Ovary (tissue), 10 donors: ENCODE measurements at regions of chr2 and their contacts with region 1.

Region 1: GRCh38 chr2:158006961-158007719 is 94.5 kb upstream of the UPP2 start:
- DNase-seq: no peak
- H3K4me3 ChIP-seq: no peak overlapping the region
- H3K27ac ChIP-seq: no peak overlapping the region
- H3K4me1 ChIP-seq: no peaks in the 10 kb centered on the region
- H3K27me3 ChIP-seq: no peaks in the 10 kb centered on the region
- CTCF ChIP-seq: no peak
- EP300 ChIP-seq: no peak
- POLR2A ChIP-seq: no peak

Region 2: DNA sequence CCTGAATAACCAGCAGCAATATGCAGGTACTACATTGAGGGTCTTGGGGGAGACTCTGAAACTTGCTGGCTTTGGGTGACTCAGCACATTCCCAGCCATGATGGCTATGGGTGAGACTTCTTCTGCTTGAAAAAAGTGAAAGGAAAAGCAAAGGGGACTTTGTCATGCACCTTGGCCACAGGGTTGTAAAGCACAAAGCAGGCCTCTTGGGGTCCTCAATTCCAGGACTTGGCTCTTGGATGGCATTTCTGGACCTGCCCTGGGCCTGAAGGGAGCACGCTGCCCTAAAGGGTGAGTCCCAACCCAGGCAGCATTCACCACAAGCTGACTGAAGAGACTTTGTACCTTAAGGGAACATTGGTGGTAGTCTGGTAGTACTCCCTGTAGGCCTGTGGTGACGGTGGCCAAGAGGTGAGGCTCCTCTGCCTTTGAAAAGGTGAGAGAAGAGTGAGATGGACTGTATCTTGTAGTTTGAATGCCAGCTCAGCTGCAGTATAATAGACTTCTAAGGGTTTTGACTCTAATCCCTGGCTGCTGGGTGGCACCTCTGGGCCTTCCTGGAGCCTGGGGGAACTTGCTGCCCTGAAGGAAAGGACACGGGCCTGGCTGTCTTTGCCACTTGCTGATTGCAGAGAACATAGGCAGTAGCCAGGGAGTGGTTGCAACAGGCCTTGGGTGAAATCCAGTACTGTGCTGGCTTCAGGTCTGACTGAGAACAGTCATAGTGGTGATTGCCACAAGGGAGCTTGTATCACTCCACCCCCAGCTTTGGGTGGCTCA is 526.8 kb before region 1 on chr2:
- intact Hi-C with region 1: loop called in 1 of 4 experiments (anchors 10 kb)
- DNase-seq: no peak
- H3K4me3 ChIP-seq: no peak overlapping the region
- H3K27ac ChIP-seq: no peak overlapping the region
- H3K4me1 ChIP-seq: no peaks in the 10 kb centered on the region
- H3K27me3 ChIP-seq: no peaks in the 10 kb centered on the region
- CTCF ChIP-seq: no peak
- EP300 ChIP-seq: no peak
- POLR2A ChIP-seq: no peak

Region 3: DNA sequence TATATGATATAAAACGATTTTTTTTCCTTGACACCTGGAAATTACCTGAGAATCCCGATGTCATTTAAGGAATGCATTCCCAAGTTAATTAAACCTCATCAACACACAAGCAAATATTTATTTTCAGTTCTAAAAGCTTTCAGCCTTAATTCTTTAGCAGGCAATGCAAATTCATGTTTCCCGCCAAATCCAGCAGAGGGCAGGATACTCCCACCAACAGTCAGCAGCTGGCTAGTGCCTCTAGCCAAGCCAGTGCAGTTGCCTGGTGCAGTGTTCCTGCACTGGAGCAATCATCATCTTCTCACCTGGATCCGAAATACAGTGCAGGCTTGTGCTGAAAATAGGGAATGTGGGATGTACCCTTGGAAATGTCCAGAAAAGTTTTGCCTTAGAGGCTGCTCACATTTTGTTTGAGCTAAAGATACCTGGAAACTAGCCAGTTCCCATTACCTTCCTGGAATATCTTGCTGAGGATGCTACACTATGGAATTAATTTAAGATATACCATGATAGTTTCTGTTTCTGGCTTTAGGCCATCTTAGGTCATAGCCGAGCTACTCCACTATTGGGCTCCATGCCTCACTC is 514.9 kb before region 1 on chr2:
- intact Hi-C with region 1: loop called in 3 of 4 experiments (anchors 5 to 10 kb)
- DNase-seq: peak; percentile 49 to 70 (median 60)
- H3K4me3 ChIP-seq: no peak overlapping the region
- H3K27ac ChIP-seq: no peak overlapping the region
- H3K4me1 ChIP-seq: peaks cover 2% of the 10 kb centered on the region
- H3K27me3 ChIP-seq: no peaks in the 10 kb centered on the region
- CTCF ChIP-seq: peak in 2 of 3 donors; percentile 27 to 58
- EP300 ChIP-seq: no peak
- POLR2A ChIP-seq: no peak

Region 4: GRCh38 chr2:157497638-157498314 is 509.4 kb before region 1 on chr2:
- intact Hi-C with region 1: loop called in 3 of 4 experiments (anchors 2 to 5 kb)
- DNase-seq: no peak
- H3K4me3 ChIP-seq: no peak overlapping the region
- H3K27ac ChIP-seq: no peak overlapping the region
- H3K4me1 ChIP-seq: no peaks in the 10 kb centered on the region
- H3K27me3 ChIP-seq: no peaks in the 10 kb centered on the region
- CTCF ChIP-seq: peak in 1 of 3 donors; percentile 35
- EP300 ChIP-seq: no peak
- POLR2A ChIP-seq: no peak

Region 5: GRCh38 chr2:157777427-157777826 is 229.7 kb before region 1 on chr2:
- intact Hi-C with region 1: loop called (anchors 2 to 10 kb)
- DNase-seq: peak; percentile 34 to 71 (median 49)
- H3K4me3 ChIP-seq: no peak overlapping the region
- H3K27ac ChIP-seq: no peak overlapping the region
- H3K4me1 ChIP-seq: peaks cover 2% of the 10 kb centered on the region
- H3K27me3 ChIP-seq: no peaks in the 10 kb centered on the region
- CTCF ChIP-seq: peak in 2 of 3 donors; percentile 62 to 66
- EP300 ChIP-seq: no peak
- POLR2A ChIP-seq: no peak

Region 6: GRCh38 chr2:157784169-157784822 is 222.8 kb before region 1 on chr2:
- intact Hi-C with region 1: loop called (anchors 2 to 10 kb)
- DNase-seq: peak in 2 of 5 donors; percentile 12 to 41
- H3K4me3 ChIP-seq: no peak overlapping the region
- H3K27ac ChIP-seq: no peak overlapping the region
- H3K4me1 ChIP-seq: peaks cover 4% of the 10 kb centered on the region
- H3K27me3 ChIP-seq: no peaks in the 10 kb centered on the region
- CTCF ChIP-seq: no peak
- EP300 ChIP-seq: no peak
- POLR2A ChIP-seq: no peak

Region 7: DNA sequence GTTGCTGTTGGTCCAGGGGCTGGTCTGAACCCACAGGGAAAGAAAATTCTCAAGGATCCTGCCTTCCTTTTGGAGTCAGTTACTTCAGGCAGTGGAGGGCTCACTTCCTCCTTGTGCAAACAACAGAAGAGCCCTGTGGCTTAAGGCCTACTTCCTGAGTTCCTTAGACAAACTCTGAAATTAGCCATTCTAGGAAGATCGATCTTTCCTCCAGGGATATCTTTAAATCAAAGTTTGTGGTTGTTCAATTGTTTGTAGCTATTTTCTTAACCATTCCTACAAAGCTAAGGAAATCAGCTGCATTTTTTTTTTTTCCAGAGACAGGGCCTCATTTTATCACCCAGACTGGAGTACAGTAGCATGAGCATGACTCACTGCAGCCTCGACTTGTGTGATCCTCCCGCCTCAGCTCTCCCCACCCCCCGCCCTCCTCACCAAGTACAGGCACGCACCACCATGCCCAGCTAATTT is 1117.3 kb after region 1 on chr2:
- intact Hi-C with region 1: loop called in 1 of 4 experiments (anchors 10 kb)
- DNase-seq: peak in 2 of 5 donors; percentile 31 to 39
- H3K4me3 ChIP-seq: no peak overlapping the region
- H3K27ac ChIP-seq: no peak overlapping the region
- H3K4me1 ChIP-seq: no peaks in the 10 kb centered on the region
- H3K27me3 ChIP-seq: no peaks in the 10 kb centered on the region
- CTCF ChIP-seq: no peak
- EP300 ChIP-seq: no peak
- POLR2A ChIP-seq: no peak